Naive thymus-derived CD4-positive, alpha-beta T cell (primary cell): ENCODE measurements at regions of chr5 and their contacts with region 1.

Region 1: DNA sequence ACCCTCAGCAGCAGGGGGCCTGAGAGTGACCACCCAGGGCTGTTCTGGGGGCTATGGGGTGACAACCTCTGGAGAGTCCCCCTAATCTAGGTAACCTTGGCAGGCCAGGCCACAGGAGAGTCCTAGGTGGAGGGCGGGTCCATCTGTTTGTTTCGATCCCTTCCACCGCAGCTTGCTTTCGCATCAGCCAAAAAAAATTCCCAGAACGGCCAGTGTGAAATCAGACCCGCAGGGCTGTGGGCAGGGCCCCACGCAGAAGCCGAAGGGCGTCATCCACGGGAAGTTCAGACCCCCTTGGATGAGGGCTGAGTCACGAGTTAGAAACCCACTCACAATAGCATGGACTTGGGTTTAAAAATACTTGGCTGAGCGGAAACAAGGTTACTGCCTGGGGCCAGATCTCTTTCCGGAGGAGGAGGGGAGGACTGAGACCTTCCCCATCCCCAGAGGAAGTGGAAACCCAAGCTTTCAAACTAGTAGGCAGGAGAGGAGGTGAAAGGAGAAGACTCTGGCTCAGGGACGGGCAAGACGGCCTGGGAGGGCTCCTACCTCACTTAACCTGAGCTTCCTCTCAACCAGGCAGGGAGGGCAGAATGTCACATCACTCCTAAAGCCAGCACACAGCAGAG is 8.5 kb downstream of the STK10 start:
- DNase-seq: peak in 8 of 9 donors; percentile 40 to 68 (median 50)
- ATAC-seq: peak; percentile 8
- H3K4me3 ChIP-seq: peak overlapping the region; percentile 76
- H3K4me3 Mint-ChIP-seq: peak overlapping the region; percentile 78 to 99 (median 90)
- H3K27ac ChIP-seq: peak overlapping the region; percentile 92
- H3K27ac Mint-ChIP-seq: peak overlapping the region; percentile 94 to 100 (median 98)
- H3K4me1 ChIP-seq: peaks cover 86 to 87% of the 10 kb centered on the region in 2 donors
- H3K4me1 Mint-ChIP-seq: peaks cover 48 to 95% (median 84%) of the 10 kb centered on the region in 7 donors
- H3K27me3 ChIP-seq: no peaks in the 10 kb centered on the region
- H3K27me3 Mint-ChIP-seq: no peaks in the 10 kb centered on the region

Region 2: DNA sequence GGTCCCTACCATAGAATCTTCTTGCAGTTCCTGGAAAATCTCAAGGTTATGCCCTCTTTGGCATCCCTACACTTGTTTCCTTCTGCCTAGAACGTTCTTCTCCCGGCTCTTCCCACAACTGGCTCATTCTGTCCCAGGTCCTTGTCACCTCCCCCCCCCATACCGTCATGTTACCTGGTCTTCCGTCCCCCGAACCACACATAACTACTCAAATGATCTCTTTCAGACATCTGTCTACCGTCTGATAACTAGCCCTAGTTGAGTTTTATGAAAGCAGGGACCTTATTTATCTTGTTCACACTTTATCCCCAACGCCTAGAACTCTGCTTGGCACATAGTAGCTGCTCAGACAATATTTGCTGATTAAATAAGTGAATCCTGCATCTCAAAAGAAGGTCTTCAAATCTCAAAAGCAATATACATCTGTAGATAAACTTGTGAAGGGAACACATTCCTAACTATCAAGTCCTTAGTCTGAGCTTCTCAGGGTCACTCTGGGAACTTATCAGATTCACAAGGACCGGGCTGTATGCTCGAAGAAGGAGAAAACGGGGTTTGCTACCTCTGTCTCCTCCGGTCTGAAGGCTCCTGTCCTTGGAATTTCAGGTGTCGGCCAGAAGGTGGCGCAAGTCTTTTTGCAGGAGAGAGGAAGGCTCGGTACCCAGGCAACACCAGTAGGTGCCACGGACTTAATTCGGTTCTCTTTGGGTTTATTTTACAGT is 1911.9 kb before region 1 on chr5:
- CTCF ChIA-PET with region 1: no interaction called
- POLR2A ChIA-PET with region 1: no interaction called
- intact Hi-C with region 1: loop called (anchors 10 kb)
- DNase-seq: peak; percentile 62 to 82 (median 77)
- ATAC-seq: peak; percentile 75
- H3K4me3 ChIP-seq: no peak overlapping the region
- H3K4me3 Mint-ChIP-seq: peak overlapping the region; percentile 63 to 81 (median 73)
- H3K27ac ChIP-seq: peak overlapping the region; percentile 66
- H3K27ac Mint-ChIP-seq: peak overlapping the region; percentile 81 to 98 (median 93)
- H3K4me1 ChIP-seq: peaks cover 69 to 75% of the 10 kb centered on the region in 2 donors
- H3K4me1 Mint-ChIP-seq: peaks cover 62 to 100% (median 94%) of the 10 kb centered on the region in 7 donors
- H3K27me3 ChIP-seq: no peaks in the 10 kb centered on the region
- H3K27me3 Mint-ChIP-seq: no peaks in the 10 kb centered on the region

Region 3: DNA sequence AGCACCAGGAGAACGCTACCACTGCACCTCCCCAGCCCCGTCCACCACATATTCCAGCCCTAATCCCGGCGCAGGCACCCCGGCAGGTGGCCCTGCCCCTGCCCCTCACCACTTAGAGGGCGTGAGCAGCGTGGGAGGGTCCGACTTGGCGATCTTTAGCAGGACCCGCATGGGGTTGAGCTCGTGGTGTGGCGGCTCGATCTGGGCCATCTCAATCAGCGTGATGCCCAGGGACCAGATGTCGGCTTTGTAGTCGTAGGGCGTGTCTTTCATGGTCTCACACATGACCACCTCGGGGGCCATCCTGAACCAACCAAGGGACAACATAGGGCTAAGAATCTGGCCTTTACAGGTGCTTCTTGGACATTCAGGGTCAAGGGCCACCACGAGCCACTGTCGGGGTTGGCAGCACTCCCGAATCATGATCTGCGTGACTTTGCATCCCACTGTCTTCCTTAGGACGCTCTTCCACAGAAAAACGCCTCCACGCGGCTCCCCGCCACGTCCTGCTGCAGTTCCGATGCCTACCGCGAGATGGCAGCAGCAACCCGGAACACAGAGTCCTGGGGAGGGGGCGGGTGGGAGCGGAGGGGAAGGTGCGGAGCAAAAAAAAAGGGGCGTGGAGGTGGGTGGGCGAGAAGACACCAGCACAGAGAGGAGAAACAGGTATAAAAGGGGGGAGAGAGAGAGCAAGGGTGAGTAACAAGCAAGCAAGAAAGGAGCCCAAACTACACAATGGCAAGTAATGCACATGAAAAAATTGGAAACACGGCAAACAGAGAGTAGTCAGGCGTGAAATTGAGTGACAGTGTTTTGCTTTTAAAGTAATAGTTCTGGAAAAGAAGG is 72.7 kb before region 1 on chr5:
- CTCF ChIA-PET with region 1: interaction called, 19 read pairs
- POLR2A ChIA-PET with region 1: interaction called, 57 read pairs
- intact Hi-C with region 1: loop called (anchors 1 kb)
- DNase-seq: peak; percentile 31 to 78 (median 59)
- ATAC-seq: peak; percentile 43
- H3K4me3 ChIP-seq: no peak overlapping the region
- H3K4me3 Mint-ChIP-seq: peak overlapping the region in 8 of 10 donors; percentile 20 to 49 (median 39)
- H3K27ac ChIP-seq: peak overlapping the region; percentile 24
- H3K27ac Mint-ChIP-seq: peak overlapping the region; percentile 18 to 88 (median 81)
- H3K4me1 ChIP-seq: peaks cover 31 to 37% of the 10 kb centered on the region in 2 donors
- H3K4me1 Mint-ChIP-seq: peaks cover 23 to 61% (median 43%) of the 10 kb centered on the region in 7 donors
- H3K27me3 ChIP-seq: no peaks in the 10 kb centered on the region
- H3K27me3 Mint-ChIP-seq: no peaks in the 10 kb centered on the region

Region 4: DNA sequence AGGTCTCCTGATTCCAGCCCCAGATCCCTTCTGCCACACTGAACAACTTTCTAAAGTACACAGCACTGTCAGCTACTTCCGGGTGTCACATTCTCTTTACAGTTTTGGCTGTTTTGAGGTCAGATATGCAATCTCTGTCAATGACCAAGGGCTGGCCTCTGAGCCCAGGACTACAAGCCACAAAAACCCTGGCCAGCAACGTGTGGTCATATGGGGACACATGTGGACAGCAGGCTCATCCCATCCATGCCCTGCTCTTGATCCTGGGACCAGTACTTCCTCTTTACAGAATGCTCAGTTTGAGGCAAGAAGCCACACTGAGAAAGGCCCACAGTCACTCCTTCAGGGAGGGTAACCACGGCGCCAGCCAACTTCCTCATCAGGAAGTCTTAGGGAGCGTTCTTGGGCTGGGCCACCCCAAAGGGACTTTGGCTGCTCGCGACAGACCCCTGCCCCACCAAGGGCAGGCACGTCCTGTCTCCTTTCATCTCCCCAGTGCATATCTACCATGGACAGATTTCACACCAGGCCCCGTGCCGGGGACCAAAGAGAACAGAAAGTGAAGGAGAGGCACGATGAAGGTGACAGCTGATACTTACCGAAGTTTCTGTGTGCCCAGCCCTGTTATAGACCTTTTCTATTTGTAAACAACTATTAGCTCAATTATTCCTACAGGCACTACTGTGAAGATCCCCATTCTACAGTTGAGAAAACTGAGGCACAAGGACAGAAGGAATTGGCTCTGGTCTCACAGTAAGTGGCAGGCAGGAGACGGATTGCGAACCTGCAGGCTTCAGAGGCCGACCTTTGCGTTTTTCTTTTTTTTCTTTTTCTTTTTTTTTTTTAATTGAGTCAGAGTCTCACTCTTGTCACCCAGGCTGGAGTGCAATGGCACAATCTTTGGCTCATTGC is 28.7 kb before region 1 on chr5:
- CTCF ChIA-PET with region 1: interaction called, 5 read pairs
- POLR2A ChIA-PET with region 1: interaction called, 37 read pairs
- intact Hi-C with region 1: loop called (anchors 1 to 2 kb)
- DNase-seq: peak in 5 of 9 donors; percentile 16 to 33 (median 24)
- ATAC-seq: peak; percentile 83
- H3K4me3 ChIP-seq: peak overlapping the region; percentile 15
- H3K4me3 Mint-ChIP-seq: peak overlapping the region; percentile 41 to 84 (median 75)
- H3K27ac ChIP-seq: peak overlapping the region; percentile 73
- H3K27ac Mint-ChIP-seq: peak overlapping the region; percentile 84 to 95 (median 91)
- H3K4me1 ChIP-seq: peaks cover 40 to 78% of the 10 kb centered on the region in 2 donors
- H3K4me1 Mint-ChIP-seq: peaks cover 55 to 88% (median 75%) of the 10 kb centered on the region in 7 donors
- H3K27me3 ChIP-seq: no peaks in the 10 kb centered on the region
- H3K27me3 Mint-ChIP-seq: no peaks in the 10 kb centered on the region

Region 5: GRCh38 chr5:172162323-172162986 is 17.0 kb before region 1 on chr5:
- CTCF ChIA-PET with region 1: interaction called, 9 read pairs
- POLR2A ChIA-PET with region 1: interaction called, 562 read pairs
- intact Hi-C with region 1: loop called in 1 of 2 experiments (anchors 1 kb)
- DNase-seq: no peak
- ATAC-seq: no peak
- H3K4me3 ChIP-seq: no peak overlapping the region
- H3K4me3 Mint-ChIP-seq: peak overlapping the region in 4 of 10 donors; percentile 1 to 61 (median 10)
- H3K27ac ChIP-seq: peak overlapping the region; percentile 43
- H3K27ac Mint-ChIP-seq: peak overlapping the region; percentile 10 to 90 (median 75)
- H3K4me1 ChIP-seq: peaks cover 38 to 43% of the 10 kb centered on the region in 2 donors
- H3K4me1 Mint-ChIP-seq: peaks cover 40 to 87% (median 65%) of the 10 kb centered on the region in 7 donors
- H3K27me3 ChIP-seq: no peaks in the 10 kb centered on the region
- H3K27me3 Mint-ChIP-seq: no peaks in the 10 kb centered on the region

Region 6: GRCh38 chr5:172334196-172334595 is 154.7 kb after region 1 on chr5:
- CTCF ChIA-PET with region 1: no interaction called
- POLR2A ChIA-PET with region 1: no interaction called
- intact Hi-C with region 1: no loop called
- DNase-seq: no peak
- ATAC-seq: no peak
- H3K4me3 ChIP-seq: no peak overlapping the region
- H3K4me3 Mint-ChIP-seq: no peak overlapping the region
- H3K27ac ChIP-seq: no peak overlapping the region
- H3K27ac Mint-ChIP-seq: no peak overlapping the region
- H3K4me1 ChIP-seq: no peaks in the 10 kb centered on the region
- H3K4me1 Mint-ChIP-seq: no peaks in the 10 kb centered on the region
- H3K27me3 ChIP-seq: no peaks in the 10 kb centered on the region
- H3K27me3 Mint-ChIP-seq: no peaks in the 10 kb centered on the region

Region 7: DNA sequence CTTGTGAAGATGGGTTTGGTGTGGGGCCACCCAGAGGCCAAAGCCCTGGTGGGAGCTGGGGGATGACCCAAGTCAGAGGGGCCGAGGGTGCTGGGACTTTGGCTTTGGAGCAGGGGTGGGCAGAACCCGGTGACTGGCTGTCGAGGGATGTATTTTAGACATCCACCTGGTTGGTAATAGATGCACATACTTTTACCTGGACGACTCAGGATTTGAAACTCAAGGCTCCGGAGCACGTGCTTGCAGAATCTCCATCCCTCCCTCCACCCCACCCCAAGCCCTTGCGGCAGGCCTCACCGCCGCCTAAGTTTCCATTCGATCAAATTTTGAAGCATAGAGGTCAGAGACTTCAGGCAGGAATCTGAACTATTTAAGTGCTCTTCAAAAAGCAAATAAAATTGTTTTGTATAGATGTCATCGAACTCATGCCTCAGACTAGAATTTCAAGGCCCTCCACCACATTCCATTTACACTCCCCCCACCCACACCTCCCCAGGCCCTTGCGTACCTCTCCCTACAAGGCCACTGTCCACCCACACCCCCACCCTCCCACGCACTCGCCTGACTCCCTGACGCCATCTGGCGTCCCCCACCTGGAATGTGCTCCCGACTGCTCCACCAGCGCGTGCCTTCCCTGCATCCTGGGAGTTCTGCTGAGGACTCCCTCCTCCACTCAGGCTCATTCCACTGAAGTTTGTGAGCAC is 723.2 kb after region 1 on chr5:
- CTCF ChIA-PET with region 1: no interaction called
- POLR2A ChIA-PET with region 1: no interaction called
- intact Hi-C with region 1: no loop called
- DNase-seq: no peak
- ATAC-seq: no peak
- H3K4me3 ChIP-seq: no peak overlapping the region
- H3K4me3 Mint-ChIP-seq: no peak overlapping the region
- H3K27ac ChIP-seq: no peak overlapping the region
- H3K27ac Mint-ChIP-seq: no peak overlapping the region
- H3K4me1 ChIP-seq: no peaks in the 10 kb centered on the region
- H3K4me1 Mint-ChIP-seq: peaks cover 0 to 4% (median 0%) of the 10 kb centered on the region in 7 donors
- H3K27me3 ChIP-seq: no peaks in the 10 kb centered on the region
- H3K27me3 Mint-ChIP-seq: no peaks in the 10 kb centered on the region